PC-9 (cell line): ENCODE measurements at regions of chr10 and their contacts with region 1.

Region 1: GRCh38 chr10:79981450-79982361 is 32.8 kb upstream of the SFTPD start:
- DNase-seq: peak; percentile 65 to 80
- H3K4me3 ChIP-seq: peak overlapping the region; percentile 88
- H3K27ac ChIP-seq: no peak overlapping the region
- H3K4me1 ChIP-seq: peaks cover 20% of the 10 kb centered on the region
- H3K27me3 ChIP-seq: no peaks in the 10 kb centered on the region
- CTCF ChIP-seq: 0 out of 2 replicates have a peak, but pooled peaks have one; percentile 15

Region 2: DNA sequence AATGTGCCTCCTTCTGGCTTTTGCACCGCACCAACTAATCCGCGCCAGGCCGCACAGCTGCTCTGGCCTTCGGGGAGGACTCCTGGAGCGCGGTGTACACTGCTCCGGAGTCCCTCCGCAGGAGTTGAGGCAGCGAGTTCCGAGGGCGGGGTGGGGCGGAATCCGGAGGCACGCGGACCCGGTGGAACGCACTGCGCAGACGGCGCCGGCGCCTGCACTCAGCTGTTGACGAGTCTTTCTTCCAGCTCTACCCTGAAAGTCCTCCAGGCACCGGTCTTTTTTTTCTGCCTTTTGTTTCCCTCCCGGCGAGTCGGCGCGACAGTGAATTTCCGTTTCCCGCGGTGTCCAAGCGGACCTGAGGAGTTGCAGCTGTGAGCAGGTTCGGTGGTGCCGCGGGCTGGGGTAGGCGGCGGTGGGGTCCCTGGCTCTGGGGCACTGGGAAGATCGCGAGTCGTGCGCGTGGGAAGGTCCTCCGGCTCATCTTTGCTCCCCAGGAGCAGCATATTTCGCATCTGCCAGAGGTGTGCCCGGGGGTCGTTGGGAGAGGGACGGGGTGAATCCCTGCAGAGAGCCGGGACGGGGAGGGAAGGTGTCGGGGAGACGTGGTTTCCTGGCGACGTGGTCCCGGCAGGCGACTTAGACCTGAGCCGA is 76.9 kb before region 1 on chr10:
- CTCF ChIA-PET with region 1: no interaction called
- POLR2A ChIA-PET with region 1: no interaction called
- intact Hi-C with region 1: loop called (anchors 2 kb)
- DNase-seq: peak; percentile 49 to 71
- H3K4me3 ChIP-seq: peak overlapping the region; percentile 80
- H3K27ac ChIP-seq: no peak overlapping the region
- H3K4me1 ChIP-seq: peaks cover 8% of the 10 kb centered on the region
- H3K27me3 ChIP-seq: peaks cover 14% of the 10 kb centered on the region; the same call in 1 of the 2 replicates
- CTCF ChIP-seq: no peak

Region 3: GRCh38 chr10:79948976-79949722 is 32.6 kb before region 1 on chr10 and contains the start of gene SFTPD:
- CTCF ChIA-PET with region 1: no interaction called
- POLR2A ChIA-PET with region 1: interaction called, 3 read pairs
- intact Hi-C with region 1: loop called (anchors 2 kb)
- DNase-seq: peak; percentile 71 to 96
- H3K4me3 ChIP-seq: no peak within 1 kb of the TSS
- H3K27ac ChIP-seq: no peak within 1 kb of the TSS
- H3K4me1 ChIP-seq: peaks cover 27% of the 10 kb centered on the region
- H3K27me3 ChIP-seq: peaks cover 15% of the 10 kb centered on the region; the same call in 1 of the 2 replicates
- CTCF ChIP-seq: no peak
- total RNA-seq, gene SFTPD: 1.5 TPM in 1 of 2 replicates, not detected in the other

Region 4: DNA sequence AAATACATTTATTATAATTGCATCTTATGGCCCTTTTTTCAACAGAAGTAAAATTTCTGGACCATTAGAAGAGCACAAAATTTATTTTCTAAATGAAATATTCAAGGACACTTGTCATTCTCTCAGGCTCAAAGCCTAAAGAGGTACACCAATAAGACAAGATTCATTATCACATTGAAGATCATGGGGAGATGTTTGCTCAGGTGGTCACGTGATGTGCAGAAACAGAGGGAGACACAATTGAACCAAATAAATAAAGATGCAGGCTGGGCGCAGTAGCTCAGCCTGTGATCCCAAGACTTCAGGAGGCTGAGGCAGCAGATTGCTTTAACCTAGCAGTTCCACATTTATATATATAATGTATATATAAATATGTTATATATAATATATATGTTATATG is 43.6 kb after region 1 on chr10:
- CTCF ChIA-PET with region 1: no interaction called
- POLR2A ChIA-PET with region 1: no interaction called
- intact Hi-C with region 1: loop called (anchors 1 kb)
- DNase-seq: no peak
- H3K4me3 ChIP-seq: no peak overlapping the region
- H3K27ac ChIP-seq: no peak overlapping the region
- H3K4me1 ChIP-seq: no peaks in the 10 kb centered on the region
- H3K27me3 ChIP-seq: no peaks in the 10 kb centered on the region
- CTCF ChIP-seq: no peak